CD14-positive monocyte (primary cell): ENCODE measurements at regions of chr11 and their contacts with region 1.

Region 1: GRCh38 chr11:47565340-47566148 is at the start of gene PTPMT1:
- DNase-seq: peak in 2 of 3 donors; percentile 34 to 38
- H3K4me3 ChIP-seq: peak within 1 kb of the TSS; percentile 87 to 97 (median 93)
- H3K4me3 Mint-ChIP-seq: peak within 1 kb of the TSS; percentile 85 to 91
- H3K27ac ChIP-seq: peak within 1 kb of the TSS; percentile 84 to 85
- H3K27ac Mint-ChIP-seq: peak within 1 kb of the TSS; percentile 63 to 89 (median 77)
- H3K4me1 ChIP-seq: peaks cover 19 to 26% of the 10 kb centered on the region in 2 donors
- H3K4me1 Mint-ChIP-seq: peaks cover 14% of the 10 kb centered on the region
- H3K27me3 ChIP-seq: no peaks in the 10 kb centered on the region
- H3K27me3 Mint-ChIP-seq: peaks cover 0 to 2% (median 0%) of the 10 kb centered on the region in 3 donors
- CTCF ChIP-seq: no peak
- polyA plus RNA-seq, gene PTPMT1: 39.2 to 87.8 (median 83.3) TPM

Region 2: DNA sequence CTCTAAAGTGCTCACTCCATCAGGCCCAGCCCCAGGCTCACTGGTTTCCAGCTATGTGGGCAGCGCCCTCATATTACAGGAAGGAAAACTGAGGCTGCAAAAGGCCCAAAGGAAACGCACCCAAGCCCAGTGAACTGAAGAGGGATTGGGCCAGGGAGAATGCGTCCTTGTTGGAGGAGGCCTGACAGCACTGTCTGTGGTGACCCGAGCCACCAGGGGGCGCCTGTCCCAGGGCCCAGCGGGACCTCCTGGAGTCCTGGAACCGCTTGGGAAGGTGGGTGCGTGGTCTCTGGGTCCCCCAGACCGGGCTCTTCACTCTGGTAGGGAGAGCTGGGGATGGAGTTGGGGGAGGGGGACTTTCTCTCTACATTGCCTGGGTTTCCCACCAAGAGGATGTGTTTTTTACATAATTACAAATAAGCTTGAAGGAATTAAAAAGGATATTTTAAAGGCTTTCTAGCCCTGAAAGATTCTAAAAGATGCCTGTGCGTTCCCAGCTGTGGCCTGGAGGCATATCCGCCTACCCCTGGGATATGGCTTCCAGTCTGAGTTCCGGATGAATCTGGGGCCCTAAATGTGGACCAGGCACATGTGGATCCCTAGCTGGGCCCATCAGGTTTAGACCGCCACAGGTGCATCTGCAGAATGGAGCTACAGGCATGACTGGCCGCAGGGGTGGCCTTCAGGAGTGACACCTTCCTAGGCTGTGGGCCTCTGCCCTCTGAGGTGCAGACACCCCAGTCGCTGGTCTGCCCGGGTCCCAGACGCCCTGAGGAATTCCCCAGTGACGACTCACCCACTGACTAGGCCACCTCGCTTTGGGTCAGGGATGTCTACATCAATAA is 191.4 kb before region 1 on chr11:
- intact Hi-C with region 1: no loop called
- DNase-seq: peak; percentile 71 to 85 (median 77)
- H3K4me3 ChIP-seq: peak overlapping the region; percentile 84 to 99 (median 97)
- H3K4me3 Mint-ChIP-seq: peak overlapping the region; percentile 98 to 99
- H3K27ac ChIP-seq: peak overlapping the region; percentile 96 to 97
- H3K27ac Mint-ChIP-seq: peak overlapping the region in 1 of 7 donors; percentile 89
- H3K4me1 ChIP-seq: peaks cover 58 to 72% of the 10 kb centered on the region in 2 donors
- H3K4me1 Mint-ChIP-seq: peaks cover 60% of the 10 kb centered on the region
- H3K27me3 ChIP-seq: no peaks in the 10 kb centered on the region
- H3K27me3 Mint-ChIP-seq: peaks cover 0 to 4% (median 2%) of the 10 kb centered on the region in 3 donors
- CTCF ChIP-seq: peak; percentile 94

Region 3: DNA sequence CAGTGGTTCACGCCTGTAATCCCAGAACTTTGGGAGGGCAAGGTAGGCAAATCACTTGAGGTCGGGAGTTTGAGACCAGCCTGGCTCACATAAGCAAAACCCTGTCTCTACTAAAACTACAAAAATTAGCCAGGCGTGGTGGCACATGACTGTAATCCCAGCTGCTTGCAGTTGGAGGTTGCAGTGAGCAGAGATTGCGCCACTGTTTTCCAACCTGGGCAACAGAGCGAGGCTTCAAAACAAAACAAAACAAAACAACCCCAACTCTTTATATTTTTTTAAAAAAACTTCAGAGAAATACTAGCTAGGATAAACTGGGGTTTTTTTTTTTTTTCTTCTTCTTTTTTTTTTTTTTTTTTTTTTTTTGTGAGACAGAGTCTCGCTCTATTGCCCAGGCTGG is 84.8 kb before region 1 on chr11:
- intact Hi-C with region 1: loop called (anchors 5 kb)
- DNase-seq: peak in 2 of 3 donors; percentile 10 to 32
- H3K4me3 ChIP-seq: no peak overlapping the region
- H3K4me3 Mint-ChIP-seq: no peak overlapping the region
- H3K27ac ChIP-seq: peak overlapping the region in 1 of 2 donors; percentile 35
- H3K27ac Mint-ChIP-seq: peak overlapping the region in 1 of 7 donors; percentile 79
- H3K4me1 ChIP-seq: peaks cover 16 to 18% of the 10 kb centered on the region in 2 donors
- H3K4me1 Mint-ChIP-seq: peaks cover 14% of the 10 kb centered on the region
- H3K27me3 ChIP-seq: no peaks in the 10 kb centered on the region
- H3K27me3 Mint-ChIP-seq: peaks cover 0 to 2% (median 2%) of the 10 kb centered on the region in 3 donors
- CTCF ChIP-seq: no peak

Region 4: GRCh38 chr11:47488674-47489394 is 76.7 kb before region 1 on chr11:
- intact Hi-C with region 1: loop called (anchors 5 kb)
- DNase-seq: no peak
- H3K4me3 ChIP-seq: no peak overlapping the region
- H3K4me3 Mint-ChIP-seq: no peak overlapping the region
- H3K27ac ChIP-seq: peak overlapping the region in 1 of 2 donors; percentile 53
- H3K27ac Mint-ChIP-seq: peak overlapping the region in 3 of 7 donors; percentile 58 to 74 (median 63)
- H3K4me1 ChIP-seq: peaks cover 11% of the 10 kb centered on the region in 2 donors
- H3K4me1 Mint-ChIP-seq: peaks cover 7% of the 10 kb centered on the region
- H3K27me3 ChIP-seq: no peaks in the 10 kb centered on the region
- H3K27me3 Mint-ChIP-seq: no peaks in the 10 kb centered on the region
- CTCF ChIP-seq: no peak

Region 5: DNA sequence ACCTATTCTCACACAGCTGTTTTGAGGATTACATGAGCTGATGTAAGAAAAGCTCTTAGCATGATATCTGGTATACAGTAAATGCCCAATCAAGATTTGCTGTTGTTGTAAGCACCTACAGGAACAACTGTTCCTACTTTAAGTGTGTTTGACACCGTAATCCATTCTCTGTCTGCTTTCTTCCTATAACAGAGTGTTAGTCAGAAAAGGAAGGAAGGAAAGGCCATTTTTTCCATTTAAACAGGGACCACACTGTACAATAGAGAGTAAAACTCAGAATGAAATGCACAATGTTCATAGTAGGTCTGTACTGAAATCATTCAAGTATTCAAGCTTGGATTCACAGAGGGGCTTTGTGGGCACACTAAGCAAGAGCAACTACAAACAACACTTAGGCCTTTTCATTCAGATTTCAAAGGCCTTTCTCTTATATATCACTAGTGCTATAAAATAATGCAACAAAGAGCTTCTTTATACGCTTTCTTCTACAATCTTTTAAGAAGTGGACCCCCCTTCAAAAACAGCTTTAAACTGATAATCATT is 55.4 kb after region 1 on chr11:
- intact Hi-C with region 1: no loop called
- DNase-seq: no peak
- H3K4me3 ChIP-seq: no peak overlapping the region
- H3K4me3 Mint-ChIP-seq: no peak overlapping the region
- H3K27ac ChIP-seq: no peak overlapping the region
- H3K27ac Mint-ChIP-seq: no peak overlapping the region
- H3K4me1 ChIP-seq: no peaks in the 10 kb centered on the region
- H3K4me1 Mint-ChIP-seq: no peaks in the 10 kb centered on the region
- H3K27me3 ChIP-seq: no peaks in the 10 kb centered on the region
- H3K27me3 Mint-ChIP-seq: no peaks in the 10 kb centered on the region
- CTCF ChIP-seq: no peak